ENCODE measurements at regions of chr3 and their contacts with region 1.

Region 1: DNA sequence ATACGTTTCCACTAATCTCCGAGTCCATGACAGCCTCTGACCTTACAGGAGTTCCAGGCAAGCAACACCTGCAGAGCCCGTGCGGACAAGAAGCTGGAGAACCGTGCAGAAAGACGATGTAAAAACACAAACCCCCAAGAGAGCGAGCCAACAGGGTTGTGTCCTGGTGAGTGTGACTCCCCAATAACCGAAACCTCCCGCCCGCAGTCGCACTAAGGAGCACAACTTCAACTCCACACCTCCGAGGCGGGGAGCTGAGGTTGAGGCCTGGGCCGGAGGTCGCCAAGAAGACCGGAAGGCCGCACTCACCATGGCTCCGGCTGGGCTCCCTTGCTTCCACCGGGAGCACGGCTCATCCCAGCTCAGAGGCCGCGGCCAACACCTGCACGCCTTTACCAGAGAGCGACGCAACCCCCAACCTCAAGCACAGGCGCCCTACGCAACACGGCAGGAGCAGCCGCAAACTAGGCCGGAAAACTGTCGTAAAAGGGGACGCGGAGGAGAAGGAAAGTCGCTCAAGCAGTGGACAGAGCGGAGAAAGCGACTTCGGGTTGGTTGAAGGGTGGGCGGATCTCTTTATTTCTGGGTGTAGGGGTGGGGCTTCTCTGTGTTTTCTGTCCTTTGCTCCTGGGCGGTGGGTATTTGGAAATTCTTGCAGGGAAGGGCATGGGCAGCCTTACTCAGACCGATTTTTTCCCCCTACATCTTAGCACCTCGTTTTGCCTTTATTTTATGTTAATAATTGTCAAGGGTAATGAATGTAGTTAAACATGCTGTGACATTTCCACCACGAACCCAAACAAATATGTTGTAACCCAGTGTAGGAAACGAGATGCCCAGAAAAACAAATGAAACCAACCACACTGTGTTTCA is at the start of gene DNAJC19:
- DNase-seq: peak; percentile 77
- ATAC-seq: peak; percentile 97
- H3K4me3 Mint-ChIP-seq: peak within 1 kb of the TSS; percentile 98
- H3K27ac Mint-ChIP-seq: peak within 1 kb of the TSS; percentile 92
- H3K4me1 Mint-ChIP-seq: peaks cover 32% of the 10 kb centered on the region
- H3K27me3 Mint-ChIP-seq: peaks cover 7% of the 10 kb centered on the region
- CTCF ChIP-seq: no peak
- total RNA-seq, gene DNAJC19: 40.3 and 53.1 TPM in 2 replicates

Region 2: DNA sequence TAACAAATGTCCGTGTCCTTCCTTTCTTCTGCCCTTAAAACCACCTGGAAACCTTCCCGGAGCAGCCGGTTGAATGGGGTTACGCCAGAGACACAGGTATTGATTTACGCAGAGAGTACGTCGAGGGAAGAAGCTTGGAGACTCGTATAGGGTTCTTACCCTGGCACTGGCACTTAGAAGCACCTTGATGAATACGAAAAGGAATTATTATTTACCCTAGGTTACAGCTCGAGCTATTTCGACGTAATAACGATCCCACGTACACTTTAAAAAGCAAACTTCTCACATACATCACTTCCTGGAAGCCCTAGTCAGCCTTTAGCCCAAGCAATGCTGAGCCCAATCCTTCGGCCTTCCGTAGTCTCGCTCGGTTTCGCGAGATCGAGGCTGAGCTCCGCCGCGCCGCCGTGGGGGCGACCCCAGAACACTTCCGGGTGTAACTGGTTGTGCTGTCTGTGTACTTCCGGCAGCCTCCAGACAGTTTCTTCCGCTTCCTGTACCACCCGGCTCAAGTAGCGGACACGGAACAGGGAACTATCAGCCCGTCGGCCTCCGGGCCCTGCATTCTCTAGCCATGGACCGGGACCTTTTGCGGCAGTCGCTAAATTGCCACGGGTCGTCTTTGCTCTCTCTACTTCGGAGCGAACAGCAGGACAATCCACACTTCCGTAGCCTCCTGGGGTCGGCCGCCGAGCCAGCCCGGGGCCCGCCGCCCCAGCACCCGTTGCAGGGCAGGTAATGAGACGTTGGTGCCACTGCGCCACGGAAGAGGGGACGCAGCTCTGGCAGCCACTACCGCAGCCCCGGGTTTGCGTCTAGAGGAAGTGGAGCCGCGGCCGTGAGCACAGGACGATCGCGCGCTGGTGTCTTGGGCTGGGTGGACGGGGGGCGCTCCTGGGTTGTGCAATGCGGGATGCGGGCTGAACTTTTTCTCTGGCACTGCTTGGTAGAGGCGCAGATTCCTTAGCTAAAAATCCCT is 387.6 kb before region 1 on chr3 and contains the start of gene TTC14:
- CTCF ChIA-PET with region 1: no interaction called
- POLR2A ChIA-PET with region 1: interaction called, 5 read pairs
- intact Hi-C with region 1: loop called (anchors 1 kb)
- DNase-seq: peak; percentile 81
- ATAC-seq: peak; percentile 91
- H3K4me3 Mint-ChIP-seq: peak within 1 kb of the TSS; percentile 97
- H3K27ac Mint-ChIP-seq: peak within 1 kb of the TSS; percentile 95
- H3K4me1 Mint-ChIP-seq: peaks cover 22% of the 10 kb centered on the region
- H3K27me3 Mint-ChIP-seq: peaks cover 5% of the 10 kb centered on the region
- CTCF ChIP-seq: no peak
- total RNA-seq, gene TTC14: 81.5 and 82.2 TPM in 2 replicates

Region 3: DNA sequence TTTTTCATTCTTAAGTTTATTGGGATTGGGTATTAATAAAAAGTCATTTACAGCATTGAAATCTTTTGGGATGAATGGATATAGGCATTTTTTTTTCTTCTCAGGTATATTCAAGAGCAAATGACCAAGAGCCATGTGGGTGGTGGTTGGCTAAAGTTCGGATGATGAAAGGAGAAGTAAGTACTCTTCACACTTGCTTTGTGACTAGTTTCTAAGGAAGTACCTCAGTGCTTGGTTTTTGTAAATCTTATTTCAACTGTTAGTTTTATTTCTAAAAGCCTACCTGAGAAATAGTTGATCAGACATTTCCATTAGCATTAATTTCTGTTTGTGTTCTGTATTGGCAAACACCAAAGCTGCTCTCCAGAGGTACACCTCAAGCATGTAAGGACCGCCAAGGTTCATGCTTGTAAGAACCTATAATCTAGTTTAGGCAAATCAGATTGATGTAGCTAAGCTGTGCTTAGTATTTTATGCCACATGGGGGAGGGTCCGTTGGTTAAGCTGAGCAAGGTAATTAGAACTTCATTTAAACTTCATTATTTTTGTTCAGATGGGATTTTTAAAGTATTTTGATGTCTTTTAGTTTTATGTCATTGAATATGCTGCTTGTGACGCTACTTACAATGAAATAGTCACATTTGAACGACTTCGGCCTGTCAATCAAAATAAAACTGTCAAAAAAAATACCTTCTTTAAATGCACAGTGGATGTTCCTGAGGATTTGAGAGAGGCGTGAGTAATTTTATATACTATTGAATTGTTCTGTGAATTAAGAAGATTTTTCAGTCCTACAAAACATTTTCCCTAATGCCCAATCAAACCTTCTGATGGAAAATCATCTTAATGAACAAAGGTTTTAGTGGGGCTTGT is 41.5 kb before region 1 on chr3:
- CTCF ChIA-PET with region 1: no interaction called
- POLR2A ChIA-PET with region 1: no interaction called
- intact Hi-C with region 1: loop called (anchors 5 kb)
- DNase-seq: no peak
- ATAC-seq: peak; percentile 71
- H3K4me3 Mint-ChIP-seq: no peak overlapping the region
- H3K27ac Mint-ChIP-seq: peak overlapping the region; percentile 59
- H3K4me1 Mint-ChIP-seq: peaks cover 17% of the 10 kb centered on the region
- H3K27me3 Mint-ChIP-seq: no peaks in the 10 kb centered on the region
- CTCF ChIP-seq: no peak